Head of caudate nucleus (tissue), 42 donors: ENCODE measurements at regions of chr11 and their contacts with region 1.

Region 1: GRCh38 chr11:56841210-56841810 is 92.8 kb upstream of the OR9G4 start:
- DNase-seq: peak in 39 of 42 donors; percentile 10 to 77 (median 49)

Region 2: DNA sequence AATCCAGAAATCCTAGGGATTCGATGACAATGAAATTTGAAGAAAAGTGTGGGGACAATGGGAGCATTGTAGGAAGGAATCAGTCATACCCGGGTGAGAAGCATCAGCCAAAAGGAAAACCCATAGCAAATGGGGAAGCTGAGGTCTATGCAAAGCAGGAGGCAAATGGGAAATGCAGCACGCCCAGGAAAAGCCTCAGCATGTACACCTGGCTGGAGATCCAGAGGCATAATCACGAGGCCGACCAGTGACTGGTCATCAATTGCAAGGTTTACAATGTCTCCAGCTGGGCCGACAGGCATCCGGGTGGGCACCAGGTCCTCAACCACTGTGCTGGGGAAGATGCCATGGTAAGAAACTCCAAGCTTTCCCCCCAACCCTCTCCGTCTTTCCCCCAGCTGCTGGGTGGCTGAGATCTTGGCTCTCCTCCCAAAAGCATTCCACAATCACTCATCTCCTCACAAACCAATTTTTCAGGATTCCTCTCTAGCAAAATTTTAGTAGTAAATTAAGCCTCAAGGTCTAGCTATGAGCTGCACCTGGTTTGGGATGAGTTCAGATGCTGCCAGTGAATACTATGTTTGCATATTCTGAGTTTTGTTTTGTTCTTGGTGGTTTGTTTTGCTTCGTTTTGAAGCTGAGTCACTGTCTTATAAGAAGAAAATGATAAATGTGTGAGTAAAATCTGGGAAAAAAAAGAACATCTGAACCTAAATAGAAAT is 49.4 kb after region 1 on chr11:
- intact Hi-C with region 1: loop called (anchors 10 kb)
- DNase-seq: no peak

Region 3: DNA sequence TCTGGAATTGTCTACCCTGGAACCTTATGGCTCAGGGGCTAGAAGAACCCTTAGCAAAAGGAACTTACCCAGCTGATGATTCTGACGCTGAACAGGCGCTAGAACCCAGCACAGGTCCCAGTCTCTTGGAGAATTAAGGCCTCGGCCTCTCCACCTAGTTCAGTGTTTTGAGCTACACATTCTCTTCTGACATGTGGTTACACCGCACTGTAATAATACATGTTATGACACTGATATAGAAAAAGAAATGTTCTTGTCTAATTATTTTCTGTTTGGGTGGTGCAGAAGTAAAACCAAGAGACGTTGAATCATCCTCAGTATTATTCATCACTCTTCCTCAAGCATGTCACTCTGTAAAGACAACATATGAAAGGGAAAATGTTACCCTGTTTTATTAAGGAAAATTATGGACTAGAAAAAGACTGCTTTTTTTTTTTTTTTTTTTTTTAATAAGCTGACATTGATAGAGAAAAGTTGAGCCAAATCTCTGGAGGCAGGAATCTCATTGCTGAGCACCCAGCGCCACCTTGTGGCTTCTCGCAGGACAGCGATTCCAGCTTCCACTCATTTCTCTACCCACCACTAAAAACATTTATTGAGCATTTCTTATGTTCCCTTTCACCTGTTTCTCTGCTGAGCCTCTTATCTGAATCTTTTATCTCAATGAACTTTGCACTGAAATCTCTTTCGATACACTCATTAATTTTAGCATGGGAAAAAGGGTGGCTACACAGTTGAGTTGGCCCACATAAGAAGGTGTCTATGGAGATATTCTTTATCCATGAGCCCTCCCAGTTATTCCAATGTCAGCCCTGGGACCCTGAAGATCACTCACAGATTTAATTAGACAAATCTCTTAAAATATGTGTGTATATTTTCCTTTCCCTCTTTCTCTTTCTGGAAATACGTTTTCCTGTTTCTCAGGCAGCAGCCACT is 408.3 kb after region 1 on chr11:
- intact Hi-C with region 1: loop called (anchors 2 kb)
- DNase-seq: peak; percentile 37 to 88 (median 73)